Sigmoid colon (tissue), 7 donors: ENCODE measurements at regions of chrX and their contacts with region 1.

Region 1: DNA sequence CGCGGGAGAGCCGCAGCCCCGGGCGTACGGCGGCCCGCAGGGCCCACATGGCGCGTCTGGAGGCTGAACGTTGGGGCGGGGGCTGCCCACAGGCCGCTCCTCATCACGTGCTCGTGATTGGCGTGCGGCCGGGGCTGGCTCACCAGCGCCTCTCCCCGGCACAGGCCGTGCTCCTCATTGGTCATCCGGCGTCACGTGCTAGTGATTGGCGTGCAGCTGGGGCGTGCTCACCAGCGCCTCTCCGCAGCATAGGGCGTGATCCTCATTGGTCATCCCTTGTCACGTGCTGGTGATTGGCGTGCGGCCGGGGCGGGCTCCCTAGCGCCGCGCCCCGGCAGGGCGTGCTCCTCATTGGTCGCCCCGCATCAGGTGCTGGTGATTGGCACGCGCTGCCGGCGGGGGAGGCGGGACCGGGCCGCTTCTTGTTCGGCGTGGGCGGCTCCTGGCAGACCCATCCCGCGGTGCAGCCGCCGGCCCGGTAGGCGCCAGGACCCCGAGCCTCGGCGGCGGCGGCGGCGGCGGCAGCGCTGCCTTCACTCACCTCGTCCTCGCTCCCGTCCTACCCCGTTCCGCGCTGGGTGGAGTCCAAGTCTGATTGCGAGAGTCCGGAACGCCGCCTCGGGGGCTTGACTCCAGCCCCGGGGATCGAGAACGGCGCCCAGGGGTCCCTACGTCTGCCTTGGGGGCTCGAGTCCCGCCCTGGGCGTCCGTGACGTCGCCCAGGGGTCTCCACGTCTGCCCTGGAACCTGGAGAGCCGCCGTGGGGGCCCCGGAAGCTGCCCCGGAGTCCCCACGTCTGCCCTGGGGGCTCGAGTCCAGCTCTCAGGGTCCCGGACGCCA is at the start of gene GTPBP6:
- DNase-seq: peak; percentile 100
- H3K4me3 ChIP-seq: peak within 1 kb of the TSS; percentile 71 to 91 (median 83)
- H3K27ac ChIP-seq: peak within 1 kb of the TSS; percentile 90 to 98 (median 96)
- H3K4me1 ChIP-seq: peaks cover 0 to 38% (median 27%) of the 10 kb centered on the region in 4 donors
- H3K27me3 ChIP-seq: peaks cover 2 to 14% (median 13%) of the 10 kb centered on the region in 3 donors
- CTCF ChIP-seq: no peak
- EP300 ChIP-seq: no peak
- POLR2A ChIP-seq: peak; percentile 20 to 30
- total RNA-seq, gene GTPBP6: 22.4 to 40.3 (median 30.9) TPM

Region 2: DNA sequence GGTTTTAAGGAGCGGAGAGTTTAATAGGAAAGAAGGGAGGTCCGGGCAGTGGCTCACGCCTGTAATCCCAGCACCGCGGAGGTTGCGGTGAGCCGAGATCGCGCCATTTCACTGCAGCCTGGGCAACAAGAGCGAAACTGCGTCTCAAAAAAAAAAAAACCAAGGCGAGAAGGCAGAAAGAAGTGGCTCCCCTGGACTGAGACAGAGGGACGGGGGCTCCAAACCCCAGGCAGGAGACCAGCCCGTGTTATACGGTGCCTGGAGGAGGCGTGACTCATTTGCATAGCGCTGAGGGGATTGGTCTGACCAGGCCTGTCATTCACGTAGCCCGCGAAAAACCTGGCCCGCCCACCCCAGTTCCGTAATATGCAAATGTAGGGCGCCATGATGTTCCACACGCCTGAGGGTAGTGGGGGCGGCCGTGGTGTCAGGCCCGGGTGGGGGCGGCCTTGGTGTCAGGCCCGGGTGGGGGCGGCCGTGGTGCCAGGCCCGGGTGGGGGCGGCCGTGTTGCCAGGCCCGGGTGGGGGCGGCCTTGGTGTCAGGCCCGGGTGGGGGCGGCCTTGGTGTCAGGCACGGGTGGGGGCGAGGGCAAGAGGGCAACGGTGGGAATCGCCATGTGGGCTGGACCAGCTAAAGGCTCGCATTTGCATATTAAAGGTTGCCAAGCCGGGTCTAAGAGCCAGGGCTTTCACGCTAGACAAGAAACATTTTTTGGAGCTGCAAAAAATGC is 35.7 kb before region 1 on chrX:
- intact Hi-C with region 1: loop called (anchors 2 kb)
- DNase-seq: peak; percentile 96
- H3K4me3 ChIP-seq: peak overlapping the region; percentile 41 to 58 (median 57)
- H3K27ac ChIP-seq: peak overlapping the region; percentile 54 to 81 (median 68)
- H3K4me1 ChIP-seq: peaks cover 0 to 19% (median 9%) of the 10 kb centered on the region in 4 donors
- H3K27me3 ChIP-seq: no peaks in the 10 kb centered on the region
- CTCF ChIP-seq: no peak
- EP300 ChIP-seq: no peak
- POLR2A ChIP-seq: no peak

Region 3: DNA sequence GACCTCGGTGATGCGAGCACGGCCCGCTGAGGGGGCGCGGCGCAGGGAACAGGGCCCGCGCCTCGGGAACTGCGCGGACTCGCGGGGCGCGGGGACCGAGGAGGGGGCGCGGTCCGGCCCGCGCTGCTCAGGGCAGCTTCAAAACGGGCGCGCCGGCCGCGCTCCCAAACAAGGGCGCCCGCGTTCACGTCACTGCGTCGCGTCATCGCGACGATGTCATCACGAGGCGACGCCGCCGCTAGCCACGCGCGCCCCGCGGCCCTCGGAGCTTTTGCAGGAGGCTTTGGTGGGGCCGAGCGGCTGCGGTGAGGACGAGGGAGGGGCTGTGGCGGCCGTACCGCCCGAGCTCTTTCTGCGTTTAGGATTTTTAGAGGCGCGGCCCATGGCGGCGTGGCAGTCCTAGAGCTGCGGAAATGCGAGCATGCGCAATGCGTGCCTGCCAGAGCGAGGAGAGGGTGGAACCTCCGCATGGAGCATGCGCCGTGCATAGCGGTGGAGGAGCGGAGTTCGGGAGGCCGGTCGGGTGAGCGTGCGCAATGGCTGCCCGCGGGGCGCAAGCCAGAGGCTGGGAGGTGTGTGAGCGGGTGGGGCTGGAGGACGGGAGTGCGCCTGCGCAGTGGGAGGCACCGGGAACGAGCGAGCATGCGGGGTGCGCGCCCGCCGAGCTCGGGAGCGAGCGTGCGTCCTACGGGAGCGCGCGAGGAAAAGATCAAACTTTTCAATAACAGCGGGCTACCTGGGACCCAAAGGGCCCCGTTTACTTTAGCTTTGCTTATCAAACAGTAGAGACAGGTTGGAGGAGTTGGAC is 68.0 kb after region 1 on chrX and contains the start of gene PPP2R3B:
- intact Hi-C with region 1: loop called (anchors 1 kb)
- DNase-seq: peak; percentile 100
- H3K4me3 ChIP-seq: peak within 1 kb of the TSS; percentile 61 to 92 (median 86)
- H3K27ac ChIP-seq: peak within 1 kb of the TSS; percentile 88 to 100 (median 98)
- H3K4me1 ChIP-seq: peaks cover 0 to 15% (median 12%) of the 10 kb centered on the region in 4 donors
- H3K27me3 ChIP-seq: no peaks in the 10 kb centered on the region
- CTCF ChIP-seq: no peak
- EP300 ChIP-seq: peak in 1 of 4 donors; percentile 35
- POLR2A ChIP-seq: peak in 1 of 2 donors; percentile 13
- total RNA-seq, gene PPP2R3B: 3.2 to 16.1 (median 6.6) TPM